Ascending aorta (tissue), 2 donors: ENCODE measurements at regions of chr2 and their contacts with region 1.

Region 1: DNA sequence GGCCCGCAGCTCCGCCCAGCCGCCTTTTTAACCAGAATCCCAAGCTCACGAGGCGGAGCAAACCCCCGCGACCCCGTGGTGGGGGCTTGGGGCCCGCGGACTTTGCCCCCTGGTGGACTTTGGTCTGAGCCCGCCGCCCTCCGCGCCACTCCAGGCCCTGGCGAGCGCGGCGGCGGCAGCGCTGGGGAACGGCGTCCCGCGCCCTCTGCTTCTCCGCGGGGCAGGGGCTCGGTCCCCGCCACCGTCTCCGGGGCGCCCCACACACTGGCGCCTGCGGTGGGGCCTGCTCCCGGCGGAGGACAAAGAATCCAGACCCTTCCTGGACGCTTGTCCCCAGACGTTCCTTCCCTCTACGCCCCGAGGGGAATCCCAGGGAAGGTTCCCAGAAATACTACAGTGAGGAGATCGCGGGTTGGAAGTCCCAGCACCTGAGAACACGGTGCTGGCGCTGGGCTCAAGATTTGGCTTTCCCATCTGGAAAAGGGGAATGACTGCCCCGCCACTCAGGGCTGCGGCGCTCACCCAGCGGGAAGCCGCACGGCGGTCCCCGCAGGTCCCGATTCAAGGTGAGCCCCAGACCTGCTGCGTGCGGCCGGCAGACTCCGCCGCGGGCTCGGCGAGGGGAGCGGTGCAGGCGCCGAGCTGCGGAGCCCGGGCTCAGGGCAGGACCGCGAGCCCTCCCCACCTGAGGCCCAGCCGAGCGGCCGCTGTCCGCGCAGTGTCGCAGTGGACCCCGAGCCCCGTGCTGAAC is at the start of gene HAAO:
- DNase-seq: peak in 1 of 2 donors; percentile 83
- H3K4me3 ChIP-seq: peak within 1 kb of the TSS; percentile 71 to 81
- H3K27ac ChIP-seq: peak within 1 kb of the TSS; percentile 91 to 97
- H3K4me1 ChIP-seq: peaks cover 5 to 30% of the 10 kb centered on the region in 2 donors
- H3K27me3 ChIP-seq: no peaks in the 10 kb centered on the region
- CTCF ChIP-seq: peak in 2 of 3 experiments; percentile 38 to 41
- total RNA-seq, gene HAAO: 7.2 TPM

Region 2: GRCh38 chr2:42072349-42073118 is 720.2 kb before region 1 on chr2:
- intact Hi-C with region 1: no loop called
- DNase-seq: no peak
- H3K4me3 ChIP-seq: no peak overlapping the region
- H3K27ac ChIP-seq: no peak overlapping the region
- H3K4me1 ChIP-seq: peaks cover 0 to 6% of the 10 kb centered on the region in 2 donors
- H3K27me3 ChIP-seq: no peaks in the 10 kb centered on the region
- CTCF ChIP-seq: no peak

Region 3: GRCh38 chr2:42568401-42569115 is 224.2 kb before region 1 on chr2 and contains the start of gene MTA3:
- intact Hi-C with region 1: loop called (anchors 10 kb)
- DNase-seq: peak in 1 of 2 donors; percentile 76
- H3K4me3 ChIP-seq: peak within 1 kb of the TSS; percentile 79 to 99
- H3K27ac ChIP-seq: peak within 1 kb of the TSS; percentile 81 to 94
- H3K4me1 ChIP-seq: peaks cover 0 to 5% of the 10 kb centered on the region in 2 donors
- H3K27me3 ChIP-seq: no peaks in the 10 kb centered on the region
- CTCF ChIP-seq: no peak
- total RNA-seq, gene MTA3: 59.2 TPM

Region 4: DNA sequence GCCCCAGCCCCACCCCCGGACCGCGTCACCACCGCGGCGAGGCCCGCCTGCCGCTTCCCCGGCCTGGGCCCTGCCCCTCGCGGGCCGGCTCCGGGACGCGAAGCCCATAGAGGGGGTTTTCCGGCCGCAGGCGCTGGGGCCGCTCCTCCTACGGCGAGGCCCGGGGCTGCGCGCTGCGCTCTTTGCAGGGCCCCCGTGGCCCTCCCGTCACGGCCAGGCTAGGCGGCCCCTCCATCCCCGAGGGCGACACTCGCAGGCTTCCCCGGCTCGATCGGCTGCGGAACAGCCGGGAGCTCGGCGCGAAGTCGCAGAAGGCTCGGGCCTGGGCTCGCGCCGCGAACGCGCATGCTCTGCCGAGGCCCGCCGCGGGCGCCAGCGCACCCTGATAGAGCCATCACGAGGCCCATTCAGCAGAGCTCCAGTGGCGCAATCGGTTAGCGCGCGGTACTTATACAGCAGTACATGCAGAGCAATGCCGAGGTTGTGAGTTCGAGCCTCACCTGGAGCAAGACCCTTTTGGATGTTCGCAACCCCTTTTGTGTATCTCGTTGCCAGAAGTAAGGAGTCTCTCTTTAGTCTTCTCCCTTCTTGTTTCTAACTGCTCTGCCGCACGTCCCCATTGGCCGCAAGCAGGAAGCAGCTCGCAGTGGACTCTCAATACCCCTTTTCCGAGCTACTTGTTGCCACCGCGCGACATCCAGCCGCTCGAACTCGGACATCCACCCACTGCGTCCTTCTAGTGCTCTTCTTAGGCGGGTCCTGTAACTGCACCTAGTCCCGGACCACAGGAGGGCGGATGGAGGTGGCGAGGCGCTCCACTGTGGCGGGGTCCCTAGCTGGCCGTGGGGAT is 17.6 kb after region 1 on chr2:
- intact Hi-C with region 1: loop called (anchors 1 kb)
- DNase-seq: peak; percentile 89 to 99
- H3K4me3 ChIP-seq: peak overlapping the region; percentile 86 to 87
- H3K27ac ChIP-seq: peak overlapping the region; percentile 100
- H3K4me1 ChIP-seq: peaks cover 3 to 13% of the 10 kb centered on the region in 2 donors
- H3K27me3 ChIP-seq: no peaks in the 10 kb centered on the region
- CTCF ChIP-seq: peak in 1 of 3 experiments; percentile 2

Region 5: GRCh38 chr2:42859006-42859552 is 66.3 kb after region 1 on chr2:
- intact Hi-C with region 1: no loop called
- DNase-seq: peak in 1 of 2 donors; percentile 88
- H3K4me3 ChIP-seq: no peak overlapping the region
- H3K27ac ChIP-seq: peak overlapping the region in 1 of 2 donors; percentile 34
- H3K4me1 ChIP-seq: peaks cover 5 to 6% of the 10 kb centered on the region in 2 donors
- H3K27me3 ChIP-seq: no peaks in the 10 kb centered on the region
- CTCF ChIP-seq: peak; percentile 89 to 91 (median 90)

Region 6: GRCh38 chr2:42874949-42875801 is 82.4 kb after region 1 on chr2:
- intact Hi-C with region 1: no loop called
- DNase-seq: peak in 1 of 2 donors; percentile 83
- H3K4me3 ChIP-seq: no peak overlapping the region
- H3K27ac ChIP-seq: peak overlapping the region; percentile 90 to 92
- H3K4me1 ChIP-seq: peaks cover 8 to 19% of the 10 kb centered on the region in 2 donors
- H3K27me3 ChIP-seq: no peaks in the 10 kb centered on the region
- CTCF ChIP-seq: no peak